ENCODE measurements at regions of chr18 and their contacts with region 1.

Region 1: GRCh38 chr18:63439334-63439733 is 17.1 kb upstream of the VPS4B start:
- DNase-seq: no peak
- H3K4me3 ChIP-seq: no peak overlapping the region
- H3K27ac ChIP-seq: no peak overlapping the region
- H3K4me1 ChIP-seq: peaks cover 0 to 33% (median 5%) of the 10 kb centered on the region in 3 donors
- H3K27me3 ChIP-seq: no peaks in the 10 kb centered on the region
- CTCF ChIP-seq: peak; percentile 52 to 88 (median 76)
- POLR2A ChIP-seq: no peak

Region 2: GRCh38 chr18:63367053-63367953 is 72.0 kb before region 1 on chr18 and contains the start of gene KDSR:
- intact Hi-C with region 1: loop called (anchors 5 kb)
- DNase-seq: peak; percentile 43
- H3K4me3 ChIP-seq: peak within 1 kb of the TSS; percentile 81 to 98 (median 88)
- H3K27ac ChIP-seq: peak within 1 kb of the TSS; percentile 95 to 99 (median 98)
- H3K4me1 ChIP-seq: peaks cover 0 to 35% (median 6%) of the 10 kb centered on the region in 3 donors
- H3K27me3 ChIP-seq: no peaks in the 10 kb centered on the region
- CTCF ChIP-seq: peak in 1 of 6 experiments; percentile 3
- POLR2A ChIP-seq: peak in 2 of 4 donors; percentile 84 to 87
- total RNA-seq, gene KDSR: 20.8 to 42.3 (median 23.0) TPM

Region 3: DNA sequence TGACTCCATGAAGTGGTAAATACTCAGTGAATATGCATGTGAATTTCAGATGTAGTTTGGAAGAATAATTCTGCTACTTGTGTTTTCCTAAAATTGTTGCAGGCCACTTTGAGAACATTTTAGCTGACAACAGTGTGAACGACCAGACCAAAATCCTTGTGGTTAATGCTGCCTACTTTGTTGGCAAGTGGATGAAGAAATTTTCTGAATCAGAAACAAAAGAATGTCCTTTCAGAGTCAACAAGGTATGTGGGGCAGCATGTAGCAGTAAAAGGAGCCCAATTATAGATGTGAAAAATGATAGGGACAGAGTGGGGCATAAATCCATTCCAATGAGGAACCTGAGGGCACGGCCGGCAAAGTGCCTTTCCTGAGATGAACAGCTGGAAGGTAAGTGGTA is 53.5 kb after region 1 on chr18:
- intact Hi-C with region 1: no loop called
- DNase-seq: no peak
- H3K4me3 ChIP-seq: no peak overlapping the region
- H3K27ac ChIP-seq: no peak overlapping the region
- H3K4me1 ChIP-seq: peaks cover 0 to 6% (median 0%) of the 10 kb centered on the region in 3 donors
- H3K27me3 ChIP-seq: no peaks in the 10 kb centered on the region
- CTCF ChIP-seq: no peak
- POLR2A ChIP-seq: no peak